ENCODE measurements at regions of chr6 and their contacts with region 1.

Region 1: DNA sequence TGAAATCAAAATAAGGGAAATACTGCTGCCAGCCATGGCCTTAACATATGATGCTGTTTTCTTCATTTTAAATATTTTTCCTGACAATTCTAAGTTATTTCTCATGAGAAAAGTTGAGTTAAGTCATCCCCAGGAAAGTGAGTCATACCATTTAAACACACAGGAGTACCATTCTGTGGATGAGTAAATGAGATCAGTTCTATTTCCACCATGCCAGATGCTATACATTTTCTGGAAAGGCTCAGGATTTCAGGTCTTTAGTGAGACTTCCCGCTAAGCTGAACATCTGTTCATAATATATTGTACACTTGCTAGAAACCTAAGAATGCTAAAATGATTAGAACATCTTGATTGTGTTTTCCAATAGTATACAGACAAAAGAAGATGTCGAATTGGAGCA is 256.2 kb upstream of the MANEA start:
- DNase-seq: no peak
- ATAC-seq: no peak
- H3K4me3 ChIP-seq: no peak overlapping the region
- H3K27ac ChIP-seq: no peak overlapping the region
- H3K4me1 ChIP-seq: no peaks in the 10 kb centered on the region
- H3K27me3 ChIP-seq: no peaks in the 10 kb centered on the region
- CTCF ChIP-seq: no peak

Region 2: GRCh38 chr6:95309545-95309944 is 11.6 kb before region 1 on chr6:
- intact Hi-C with region 1: loop called in 1 of 2 experiments (anchors 1 kb)
- DNase-seq: no peak
- ATAC-seq: no peak
- H3K4me3 ChIP-seq: no peak overlapping the region
- H3K27ac ChIP-seq: no peak overlapping the region
- H3K4me1 ChIP-seq: no peaks in the 10 kb centered on the region
- H3K27me3 ChIP-seq: no peaks in the 10 kb centered on the region
- CTCF ChIP-seq: no peak

Measured in psoas muscle (tissue), 8 donors.